Heart left ventricle (tissue), 16 donors: ENCODE measurements at regions of chr6 and their contacts with region 1.

Region 1: DNA sequence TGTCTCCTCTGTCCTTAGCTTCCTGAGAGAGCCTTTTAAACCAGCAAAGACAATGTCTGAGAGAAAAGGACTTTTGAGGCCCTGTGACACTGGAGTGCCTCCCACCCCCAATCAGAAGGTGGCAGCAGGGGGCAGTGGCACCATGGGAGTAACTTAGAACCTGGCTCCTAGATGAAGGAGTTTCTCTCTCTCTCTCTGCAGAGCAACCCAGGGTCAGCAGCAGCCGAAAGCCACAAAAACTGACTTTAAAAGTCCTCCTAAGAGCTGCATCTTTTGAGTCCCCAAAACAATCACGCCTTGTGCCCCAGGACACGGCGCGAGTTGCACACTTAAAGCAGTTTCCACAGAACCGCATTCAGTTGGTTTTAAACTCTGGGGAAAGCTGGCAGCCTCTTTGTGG is 5.3 kb upstream of the TCP11 start:
- DNase-seq: peak in 4 of 5 donors; percentile 25 to 51 (median 45)
- ATAC-seq: peak; percentile 83 to 92 (median 91)
- H3K4me3 ChIP-seq: no peak overlapping the region
- H3K27ac ChIP-seq: no peak overlapping the region
- H3K4me1 ChIP-seq: peaks cover 0 to 11% (median 0%) of the 10 kb centered on the region in 12 donors
- H3K27me3 ChIP-seq: peaks cover 0 to 2% (median 0%) of the 10 kb centered on the region in 9 donors
- CTCF ChIP-seq: peak; percentile 30 to 70 (median 60)
- POLR2A ChIP-seq: no peak

Region 2: DNA sequence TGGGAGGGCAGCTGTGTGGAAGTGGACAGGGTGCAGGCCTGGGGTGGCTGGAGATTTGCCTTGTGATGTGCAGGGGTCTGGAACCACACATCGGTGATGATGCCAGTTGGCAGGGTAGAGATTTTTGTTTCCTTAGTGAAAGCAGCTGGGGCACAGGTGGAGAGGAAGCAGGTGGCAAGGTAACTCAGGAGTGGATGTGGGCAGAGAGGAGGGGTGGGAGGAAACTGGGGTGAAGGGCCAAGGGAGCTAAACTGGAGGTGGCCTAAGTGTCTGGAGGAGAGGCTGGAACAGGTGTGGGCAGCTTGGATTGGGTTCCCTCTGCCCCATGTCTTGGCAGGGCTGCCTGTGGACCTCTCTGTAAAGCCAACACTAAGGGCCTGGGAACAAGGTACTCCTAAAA is 62.6 kb after region 1 on chr6:
- intact Hi-C with region 1: loop called (anchors 1 to 10 kb)
- DNase-seq: no peak
- ATAC-seq: no peak
- H3K4me3 ChIP-seq: no peak overlapping the region
- H3K27ac ChIP-seq: no peak overlapping the region
- H3K4me1 ChIP-seq: peaks cover 0 to 15% (median 4%) of the 10 kb centered on the region in 12 donors
- H3K27me3 ChIP-seq: peaks cover 0 to 31% (median 7%) of the 10 kb centered on the region in 9 donors
- CTCF ChIP-seq: no peak
- POLR2A ChIP-seq: no peak